Caco-2 (cell line): ENCODE measurements at regions of chr6 and their contacts with region 1.

Region 1: GRCh38 chr6:84033523-84034451 is at the start of gene MRAP2:
- DNase-seq: peak; percentile 42 to 68
- H3K4me3 ChIP-seq: peak within 1 kb of the TSS; percentile 66
- H3K4me3 Mint-ChIP-seq: peak within 1 kb of the TSS; percentile 72
- H3K27ac Mint-ChIP-seq: no peak within 1 kb of the TSS
- H3K4me1 ChIP-seq: 0 out of 2 replicates have a peak, but pooled peaks cover 3% of the 10 kb centered on the region
- H3K4me1 Mint-ChIP-seq: peaks cover 12% of the 10 kb centered on the region
- H3K27me3 ChIP-seq: peaks cover 2% of the 10 kb centered on the region; the same call in 1 of the 2 replicates
- H3K27me3 Mint-ChIP-seq: no peaks in the 10 kb centered on the region
- CTCF ChIP-seq: no peak
- total RNA-seq, gene MRAP2: 1.4 and 1.8 TPM in 2 replicates

Region 2: GRCh38 chr6:84227434-84228197 is 193.8 kb after region 1 on chr6 and contains the start of gene CEP162:
- CTCF ChIA-PET with region 1: no interaction called
- POLR2A ChIA-PET with region 1: no interaction called
- intact Hi-C with region 1: loop called (anchors 5 kb)
- DNase-seq: peak; percentile 85 to 88
- H3K4me3 ChIP-seq: peak within 1 kb of the TSS; percentile 50
- H3K4me3 Mint-ChIP-seq: peak within 1 kb of the TSS; percentile 86
- H3K27ac Mint-ChIP-seq: peak within 1 kb of the TSS; percentile 64
- H3K4me1 ChIP-seq: 0 out of 2 replicates have a peak, but pooled peaks cover 4% of the 10 kb centered on the region
- H3K4me1 Mint-ChIP-seq: peaks cover 6% of the 10 kb centered on the region
- H3K27me3 ChIP-seq: no peaks in the 10 kb centered on the region
- H3K27me3 Mint-ChIP-seq: no peaks in the 10 kb centered on the region
- CTCF ChIP-seq: peak; percentile 57 to 62
- total RNA-seq, gene CEP162: 6.8 and 7.3 TPM in 2 replicates